ENCODE measurements at regions of chr11 and their contacts with region 1.

Region 1: DNA sequence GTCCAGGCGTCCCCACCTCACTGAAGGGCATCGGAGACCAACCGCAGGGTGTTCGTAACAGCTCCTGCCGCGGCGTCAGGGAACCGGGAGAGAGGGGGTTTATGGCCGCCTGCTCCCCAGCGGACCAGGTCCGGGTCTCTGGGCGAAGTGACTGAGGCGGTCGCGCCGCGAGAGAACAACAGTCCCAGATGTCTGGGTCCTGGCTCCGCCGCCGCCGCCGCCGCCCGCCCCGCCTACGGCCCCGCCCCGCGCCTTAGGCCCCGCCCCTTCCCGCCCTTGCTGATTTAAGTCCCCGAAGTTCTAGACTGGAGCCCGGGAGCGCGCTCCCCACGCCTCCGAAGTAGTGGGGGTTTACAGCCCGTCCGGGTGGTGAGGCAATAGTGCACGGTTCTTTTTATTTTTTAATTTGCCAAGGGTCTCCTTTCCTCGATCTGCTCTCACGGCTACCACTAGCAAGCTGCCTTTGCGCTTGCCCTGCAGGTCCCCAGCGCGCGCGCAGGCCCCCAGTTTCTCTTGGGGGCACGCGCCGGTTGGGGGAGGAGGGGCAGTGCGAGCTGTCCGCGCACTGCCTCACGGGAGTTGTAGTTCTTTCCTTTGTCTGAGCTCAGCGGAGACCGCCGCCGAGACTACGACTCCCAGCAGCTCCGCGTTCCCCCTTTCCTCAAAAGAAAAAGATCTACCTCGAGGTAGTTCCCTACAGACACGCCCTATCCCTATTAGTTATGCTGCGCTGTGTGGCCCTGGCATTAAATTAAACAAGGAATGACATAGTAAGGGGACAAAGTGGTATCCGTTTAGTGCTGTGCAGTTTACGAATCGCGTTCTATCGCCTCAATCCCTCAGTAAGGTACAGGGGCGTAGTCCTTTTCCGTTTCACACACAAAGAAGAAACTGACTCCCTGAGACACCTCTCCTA is at the start of gene PGM2L1:
- DNase-seq: peak; percentile 83 to 96 (median 94)
- H3K4me3 ChIP-seq: peak within 1 kb of the TSS; percentile 64 to 98 (median 88)
- H3K27ac ChIP-seq: peak within 1 kb of the TSS; percentile 28 to 96 (median 90)
- H3K27me3 ChIP-seq: no peaks in the 10 kb centered on the region
- CTCF ChIP-seq: peak in 25 of 56 donors; percentile 3 to 50 (median 25)
- total RNA-seq, gene PGM2L1: 26.3 to 120 (median 74.7) TPM

Region 2: GRCh38 chr11:74170694-74171629 is 227.5 kb before region 1 on chr11 and contains the starts of genes C2CD3 and PPME1:
- intact Hi-C with region 1: loop called in 1 of 2 experiments (anchors 10 kb)
- DNase-seq: peak; percentile 94 to 99 (median 98)
- H3K4me3 ChIP-seq: peak within 1 kb of the TSS; percentile 67 to 99 (median 87)
- H3K27ac ChIP-seq: peak within 1 kb of the TSS; percentile 24 to 93 (median 86)
- H3K27me3 ChIP-seq: no peaks in the 10 kb centered on the region
- CTCF ChIP-seq: peak in 54 of 56 donors; percentile 26 to 79 (median 60)
- total RNA-seq, gene C2CD3: 30.0 to 76.8 (median 42.6) TPM
- total RNA-seq, gene PPME1: 48.5 to 158 (median 108) TPM

Region 3: GRCh38 chr11:74257959-74258553 is 140.4 kb before region 1 on chr11:
- intact Hi-C with region 1: no loop called
- DNase-seq: peak in 1 of 10 donors; percentile 30
- H3K4me3 ChIP-seq: no peak overlapping the region
- H3K27ac ChIP-seq: no peak overlapping the region
- H3K27me3 ChIP-seq: no peaks in the 10 kb centered on the region
- CTCF ChIP-seq: no peak

Region 4: GRCh38 chr11:74418509-74418895 is 20.0 kb after region 1 on chr11:
- intact Hi-C with region 1: no loop called
- DNase-seq: no peak
- H3K4me3 ChIP-seq: no peak overlapping the region
- H3K27ac ChIP-seq: no peak overlapping the region
- H3K27me3 ChIP-seq: no peaks in the 10 kb centered on the region
- CTCF ChIP-seq: no peak

Region 5: DNA sequence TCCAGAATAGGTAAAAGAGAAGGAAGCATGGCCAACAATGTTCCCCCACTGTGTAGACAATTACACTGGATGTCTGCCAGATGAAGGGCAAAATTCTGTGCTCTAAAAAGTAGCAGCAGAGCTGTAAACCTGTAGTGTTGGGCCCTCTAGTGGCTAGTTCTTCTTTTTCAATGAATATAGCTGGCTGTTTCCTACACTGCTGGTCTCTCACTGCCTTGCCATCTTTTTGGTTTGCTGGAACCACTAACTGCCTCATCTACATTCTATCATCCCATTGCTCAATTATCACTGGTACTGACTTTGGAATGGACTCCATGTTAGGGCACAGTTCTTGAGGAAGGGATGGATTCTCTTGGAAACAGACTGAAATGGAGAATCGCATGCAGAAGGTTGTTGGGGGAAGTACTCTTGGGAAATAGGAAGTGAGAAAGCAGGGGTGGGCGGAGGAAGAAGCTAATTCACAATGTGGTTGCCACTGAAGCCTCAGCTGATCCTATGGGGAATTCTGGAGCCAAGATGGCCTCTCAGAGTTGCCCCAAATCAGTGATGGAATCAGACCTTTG is 50.9 kb after region 1 on chr11:
- intact Hi-C with region 1: loop called in 1 of 2 experiments (anchors 5 kb)
- DNase-seq: peak in 3 of 10 donors; percentile 15 to 70 (median 45)
- H3K4me3 ChIP-seq: no peak overlapping the region
- H3K27ac ChIP-seq: no peak overlapping the region
- H3K27me3 ChIP-seq: no peaks in the 10 kb centered on the region
- CTCF ChIP-seq: peak; percentile 65 to 95 (median 84)

Region 6: GRCh38 chr11:74492974-74493790 is 94.7 kb after region 1 on chr11 and contains the start of gene LIPT2:
- intact Hi-C with region 1: loop called in 1 of 2 experiments (anchors 5 kb)
- DNase-seq: peak; percentile 80 to 96 (median 94)
- H3K4me3 ChIP-seq: peak within 1 kb of the TSS; percentile 73 to 100 (median 90)
- H3K27ac ChIP-seq: peak within 1 kb of the TSS; percentile 79 to 100 (median 98)
- H3K27me3 ChIP-seq: no peaks in the 10 kb centered on the region
- CTCF ChIP-seq: peak in 24 of 56 donors; percentile 7 to 43 (median 20)
- total RNA-seq, gene LIPT2: 0.65 to 8.6 (median 2.9) TPM in 118 of 120 experiments, not detected in the others

Region 7: DNA sequence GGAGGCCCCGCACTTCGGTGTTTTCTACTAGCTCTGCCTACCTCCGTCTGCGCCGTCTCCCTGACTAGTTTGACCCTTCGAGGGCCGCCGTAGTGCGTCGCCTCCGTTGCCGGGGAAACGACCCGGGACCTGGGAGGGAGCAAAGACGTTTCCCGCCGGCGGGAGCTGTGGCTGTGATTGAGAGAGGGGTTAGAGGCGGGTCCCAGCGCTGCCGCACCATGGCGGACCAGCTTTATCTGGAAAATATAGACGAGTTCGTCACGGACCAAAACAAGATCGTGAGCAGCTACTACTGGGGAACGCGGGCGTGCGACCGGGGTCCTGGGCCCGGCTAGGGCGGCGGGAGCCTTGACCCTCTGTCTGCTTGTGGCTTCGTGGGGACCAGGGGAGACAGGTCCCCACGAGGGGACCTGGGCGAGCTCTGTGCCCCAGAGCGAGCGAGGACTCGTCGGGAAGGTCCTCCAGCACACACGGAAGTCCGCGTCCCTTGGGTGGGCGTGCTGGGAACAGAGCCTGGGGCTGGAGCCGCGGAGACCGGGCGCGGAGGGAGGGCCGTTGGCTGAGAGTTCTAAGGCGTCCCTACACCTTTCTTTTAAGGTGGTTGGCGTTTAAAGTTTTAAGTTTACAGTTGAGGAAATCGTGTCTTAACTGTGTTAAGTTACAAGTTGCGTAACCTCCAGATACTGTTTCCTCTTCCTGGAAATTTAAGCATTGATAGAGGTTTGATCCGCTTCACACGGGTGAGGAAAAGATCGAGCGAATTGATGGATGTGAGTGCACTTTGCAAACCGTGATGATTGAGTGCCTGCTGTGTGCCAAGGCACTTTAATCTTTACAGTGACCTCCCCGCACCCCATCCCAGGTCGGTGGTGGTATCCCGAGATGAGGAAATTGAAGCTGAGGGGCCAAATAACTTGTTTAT is 194.2 kb after region 1 on chr11 and contains the start of gene POLD3:
- intact Hi-C with region 1: loop called (anchors 5 to 10 kb)
- DNase-seq: peak; percentile 91 to 97 (median 96)
- H3K4me3 ChIP-seq: peak within 1 kb of the TSS; percentile 57 to 100 (median 91)
- H3K27ac ChIP-seq: peak within 1 kb of the TSS in 56 of 59 donors; percentile 11 to 87 (median 64)
- H3K27me3 ChIP-seq: no peaks in the 10 kb centered on the region
- CTCF ChIP-seq: peak in 37 of 56 donors; percentile 12 to 59 (median 32)
- total RNA-seq, gene POLD3: 10.9 to 24.0 (median 16.3) TPM

Region 8: DNA sequence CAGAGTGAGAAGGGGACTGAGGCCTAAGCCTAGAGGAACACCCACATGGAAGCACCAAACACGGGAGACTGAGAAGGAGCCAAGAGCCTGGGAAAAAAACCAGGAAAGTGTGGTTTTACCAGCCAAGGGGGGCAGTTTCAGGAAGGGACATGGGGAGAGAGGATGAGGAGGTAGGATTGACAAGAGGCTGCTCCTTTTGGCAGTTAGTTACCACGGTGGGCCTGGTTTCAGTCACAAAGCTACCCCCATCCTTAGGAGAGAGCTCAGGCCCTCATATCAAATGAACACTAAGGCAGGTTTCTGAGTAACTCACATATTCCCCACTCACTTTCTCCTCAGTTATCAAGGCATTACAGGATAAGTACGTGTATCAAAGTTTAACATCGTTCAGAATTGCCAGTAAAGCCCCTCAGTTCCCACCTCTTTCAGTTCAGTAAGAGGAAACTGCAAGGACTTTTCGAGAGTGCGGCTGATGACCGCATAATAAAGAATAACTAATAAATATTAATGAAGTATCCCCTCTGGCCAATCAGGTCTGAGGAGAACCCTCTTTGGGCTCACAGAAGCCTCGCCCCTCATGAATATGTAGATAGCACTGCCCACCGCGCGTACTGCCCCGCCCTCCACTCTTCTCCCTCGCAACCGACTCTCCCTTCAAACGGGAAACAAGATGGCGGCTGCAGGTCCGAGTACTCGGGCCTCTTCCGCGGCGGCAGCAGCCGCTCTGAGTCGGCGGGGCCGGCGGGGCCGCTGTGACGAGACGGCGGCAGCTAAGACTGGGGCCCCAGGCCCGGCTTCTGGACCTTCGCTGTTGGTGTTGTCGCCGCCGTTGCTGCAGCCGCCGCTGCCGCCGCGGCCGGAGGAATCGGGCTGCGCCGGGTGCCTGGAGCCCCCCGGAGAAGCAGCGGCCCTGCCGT is 350.0 kb after region 1 on chr11 and contains the start of gene RNF169:
- intact Hi-C with region 1: loop called in 1 of 2 experiments (anchors 10 kb)
- DNase-seq: peak; percentile 84 to 97 (median 96)
- H3K4me3 ChIP-seq: peak within 1 kb of the TSS; percentile 60 to 94 (median 82)
- H3K27ac ChIP-seq: peak within 1 kb of the TSS; percentile 60 to 99 (median 93)
- H3K27me3 ChIP-seq: no peaks in the 10 kb centered on the region
- CTCF ChIP-seq: peak in 12 of 56 donors; percentile 12 to 27 (median 17)
- total RNA-seq, gene RNF169: 13.4 to 32.9 (median 19.4) TPM

Measured in dorsolateral prefrontal cortex (tissue), 120 donors.